ENCODE measurements at regions of chr7 and their contacts with region 1.

Region 1: DNA sequence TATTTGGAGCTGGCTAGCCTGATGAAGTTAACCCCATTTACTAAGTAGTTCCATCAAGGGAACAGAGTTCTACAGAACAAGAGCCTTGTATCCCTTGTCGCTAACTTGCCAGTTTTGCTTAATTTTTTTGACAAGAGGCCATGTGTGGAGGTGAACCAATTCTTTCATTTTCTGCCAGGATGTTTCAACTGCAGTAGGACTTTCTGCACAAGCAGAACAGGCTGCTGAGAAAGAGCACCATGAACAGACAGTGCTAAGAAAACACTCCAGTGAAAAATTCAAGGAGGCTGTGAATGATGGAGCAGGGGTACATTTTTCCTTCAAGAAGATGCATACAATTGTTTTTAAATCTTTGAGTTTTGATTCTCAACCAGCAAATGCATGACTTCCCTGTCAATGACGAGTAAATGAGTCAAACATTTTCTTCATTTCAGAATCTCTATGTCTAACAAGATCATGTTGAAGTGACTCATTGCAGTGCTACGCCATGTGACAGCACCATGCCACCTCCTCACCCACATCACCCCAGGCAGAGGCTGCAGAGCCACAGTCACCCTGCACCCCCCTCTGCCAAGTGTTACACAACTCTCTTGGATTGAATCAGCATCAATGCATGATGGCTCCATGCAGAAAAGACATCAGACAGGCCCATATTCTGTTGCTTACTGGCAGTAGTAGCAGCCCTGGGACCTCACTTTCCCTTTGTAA is 193.1 kb downstream of the COBL start:
- DNase-seq: peak; percentile 38
- H3K4me3 Mint-ChIP-seq: no peak overlapping the region
- H3K27ac Mint-ChIP-seq: peak overlapping the region; percentile 90
- H3K4me1 Mint-ChIP-seq: peaks cover 33% of the 10 kb centered on the region
- H3K27me3 Mint-ChIP-seq: peaks cover 2% of the 10 kb centered on the region

Region 2: GRCh38 chr7:50142425-50143017 is 981.0 kb before region 1 on chr7:
- intact Hi-C with region 1: loop called (anchors 10 kb)
- DNase-seq: no peak
- H3K4me3 Mint-ChIP-seq: peak overlapping the region; percentile 30
- H3K27ac Mint-ChIP-seq: peak overlapping the region; percentile 77
- H3K4me1 Mint-ChIP-seq: peaks cover 44% of the 10 kb centered on the region
- H3K27me3 Mint-ChIP-seq: peaks cover 2% of the 10 kb centered on the region

Region 3: GRCh38 chr7:50449881-50450589 is 673.4 kb before region 1 on chr7 and contains the start of gene FIGNL1:
- intact Hi-C with region 1: loop called (anchors 5 kb)
- DNase-seq: peak; percentile 81
- H3K4me3 Mint-ChIP-seq: peak within 1 kb of the TSS; percentile 86
- H3K27ac Mint-ChIP-seq: peak within 1 kb of the TSS; percentile 71
- H3K4me1 Mint-ChIP-seq: peaks cover 41% of the 10 kb centered on the region
- H3K27me3 Mint-ChIP-seq: no peaks in the 10 kb centered on the region
- total RNA-seq, gene FIGNL1: 40.0 and 42.5 TPM in 2 replicates

Region 4: DNA sequence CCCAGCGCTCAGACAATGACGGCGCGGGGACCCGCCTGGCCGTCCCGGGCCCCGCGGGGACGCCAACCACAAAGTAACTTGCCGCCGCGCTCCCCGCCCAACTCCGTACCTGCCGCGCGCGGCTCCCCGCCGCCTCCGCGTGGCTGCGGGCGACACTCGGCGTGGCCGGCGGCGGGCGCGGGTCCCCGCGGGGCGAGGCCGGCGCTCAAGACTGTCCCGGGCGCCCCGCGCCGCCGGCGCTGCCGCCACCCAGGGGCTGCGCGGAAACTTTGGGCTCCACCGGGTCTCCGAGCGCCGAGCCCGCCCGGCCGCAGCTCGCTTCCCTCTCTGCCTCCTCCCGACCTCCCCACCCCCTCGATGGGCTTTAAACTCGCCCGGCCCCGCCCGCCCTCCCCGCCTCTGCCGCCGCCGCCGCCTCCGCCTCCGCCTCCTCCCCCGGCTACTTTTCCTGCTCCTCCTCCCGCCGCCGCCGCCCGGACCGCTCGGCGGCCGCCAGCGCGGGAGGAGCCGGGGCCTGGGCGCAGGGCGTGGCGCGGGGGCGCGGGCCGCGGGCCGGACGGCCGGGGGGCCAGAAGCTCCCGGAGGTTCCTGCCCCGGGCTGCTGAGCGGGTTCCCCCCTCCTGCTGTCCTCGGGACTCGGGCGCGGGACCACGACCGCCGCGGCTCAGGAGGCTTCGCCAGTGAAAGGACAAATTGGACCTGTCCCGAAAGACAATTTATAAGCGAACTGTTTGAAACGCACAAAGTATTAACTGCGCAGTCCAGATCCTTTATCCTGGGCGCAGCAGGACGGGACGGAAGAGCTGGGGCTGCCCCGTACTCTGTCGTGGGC is 330.1 kb before region 1 on chr7:
- intact Hi-C with region 1: loop called (anchors 5 kb)
- DNase-seq: peak; percentile 18
- H3K4me3 Mint-ChIP-seq: peak overlapping the region; percentile 61
- H3K27ac Mint-ChIP-seq: no peak overlapping the region
- H3K4me1 Mint-ChIP-seq: peaks cover 7% of the 10 kb centered on the region
- H3K27me3 Mint-ChIP-seq: peaks cover 69% of the 10 kb centered on the region

Region 5: DNA sequence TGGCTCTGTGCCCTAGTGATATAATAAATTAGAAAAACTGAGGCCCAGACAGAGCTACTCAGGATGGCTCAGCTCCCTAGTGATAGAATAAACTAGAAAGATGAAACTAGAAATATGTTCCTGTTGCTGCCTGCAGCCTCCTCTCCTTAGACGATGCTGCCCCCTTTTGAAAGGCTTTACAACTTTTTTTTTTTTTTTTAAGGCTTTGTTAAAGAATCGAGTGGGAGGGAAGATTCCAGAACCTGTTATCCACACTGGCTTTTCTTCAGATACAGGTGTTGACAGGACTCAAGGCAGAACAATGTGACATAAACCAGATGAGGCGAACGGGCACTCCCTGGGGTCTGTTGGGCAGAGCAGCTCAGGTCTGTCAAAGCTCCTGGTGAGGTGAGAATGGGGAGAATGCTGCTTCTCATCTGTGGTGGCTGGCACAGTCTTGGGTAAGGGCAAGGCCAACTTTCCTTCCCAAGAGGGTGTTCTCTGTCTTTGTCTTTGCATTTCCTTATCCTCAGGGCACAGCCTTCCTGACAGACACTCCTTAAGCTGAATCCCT is 18.1 kb after region 1 on chr7:
- intact Hi-C with region 1: loop called (anchors 1 kb)
- DNase-seq: no peak
- H3K4me3 Mint-ChIP-seq: no peak overlapping the region
- H3K27ac Mint-ChIP-seq: no peak overlapping the region
- H3K4me1 Mint-ChIP-seq: peaks cover 23% of the 10 kb centered on the region
- H3K27me3 Mint-ChIP-seq: peaks cover 11% of the 10 kb centered on the region

Region 6: DNA sequence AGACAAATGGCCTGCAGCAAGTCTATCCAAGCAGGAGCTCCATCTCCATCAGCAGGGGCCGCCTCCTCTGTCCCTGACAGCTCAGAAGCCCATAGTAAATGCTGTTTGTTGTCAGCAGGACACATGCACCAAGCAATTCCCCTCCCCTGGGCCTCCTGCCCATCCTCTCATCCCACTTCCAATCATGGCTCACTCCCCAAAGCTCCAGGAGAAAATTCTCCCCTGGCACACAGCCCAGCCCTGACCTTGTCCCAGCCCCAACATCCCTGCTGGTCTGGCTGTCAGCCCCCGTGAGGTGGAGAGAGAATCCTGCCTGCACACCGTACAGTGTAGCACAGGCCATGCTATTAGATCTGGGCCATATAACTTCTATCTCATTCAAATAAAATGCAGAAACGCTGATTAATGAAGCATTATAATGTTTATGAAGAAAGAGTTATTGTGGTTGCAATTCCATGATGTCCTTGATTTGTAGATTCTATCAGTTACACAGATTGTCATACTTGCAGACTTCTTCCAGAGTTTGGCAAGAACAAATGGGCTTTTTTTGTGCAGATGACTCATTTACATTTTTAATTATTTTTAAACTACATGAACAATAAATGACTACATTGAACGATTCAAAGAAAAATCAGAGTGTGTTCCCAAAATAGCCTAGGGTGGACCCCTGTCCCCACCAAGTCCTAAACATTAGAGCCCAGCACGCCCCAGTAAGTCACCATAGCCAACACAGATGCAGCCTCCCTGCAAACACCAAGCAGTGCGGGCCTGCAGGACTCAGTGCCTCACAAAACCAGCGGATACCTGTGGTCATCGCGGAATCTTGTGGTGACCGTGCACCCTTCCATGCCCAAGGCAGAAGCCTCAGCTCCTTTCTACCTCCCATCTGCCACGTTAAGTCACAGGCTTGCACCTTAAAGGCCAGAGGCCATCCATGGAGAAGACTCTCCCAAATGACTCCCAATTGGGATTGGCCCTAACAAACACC is 123.1 kb after region 1 on chr7:
- intact Hi-C with region 1: no loop called
- DNase-seq: no peak
- H3K4me3 Mint-ChIP-seq: no peak overlapping the region
- H3K27ac Mint-ChIP-seq: no peak overlapping the region
- H3K4me1 Mint-ChIP-seq: no peaks in the 10 kb centered on the region
- H3K27me3 Mint-ChIP-seq: no peaks in the 10 kb centered on the region